Ascending aorta (tissue), 2 donors: ENCODE measurements at regions of chr2 and their contacts with region 1.

Region 1: GRCh38 chr2:42865884-42866881 is 73.8 kb upstream of the HAAO start:
- DNase-seq: peak in 1 of 2 donors; percentile 76
- H3K4me3 ChIP-seq: no peak overlapping the region
- H3K27ac ChIP-seq: peak overlapping the region; percentile 87 to 88
- H3K4me1 ChIP-seq: peaks cover 3 to 22% of the 10 kb centered on the region in 2 donors
- H3K27me3 ChIP-seq: no peaks in the 10 kb centered on the region
- CTCF ChIP-seq: no peak

Region 2: GRCh38 chr2:42792583-42793333 is 73.4 kb before region 1 on chr2 and contains the start of gene HAAO:
- intact Hi-C with region 1: no loop called
- DNase-seq: peak in 1 of 2 donors; percentile 83
- H3K4me3 ChIP-seq: peak within 1 kb of the TSS; percentile 71 to 81
- H3K27ac ChIP-seq: peak within 1 kb of the TSS; percentile 91 to 97
- H3K4me1 ChIP-seq: peaks cover 5 to 30% of the 10 kb centered on the region in 2 donors
- H3K27me3 ChIP-seq: no peaks in the 10 kb centered on the region
- CTCF ChIP-seq: peak in 2 of 3 experiments; percentile 38 to 41
- total RNA-seq, gene HAAO: 7.2 TPM

Region 3: GRCh38 chr2:42906557-42907411 is 40.6 kb after region 1 on chr2:
- intact Hi-C with region 1: loop called (anchors 5 kb)
- DNase-seq: peak in 1 of 2 donors; percentile 83
- H3K4me3 ChIP-seq: peak overlapping the region in 1 of 2 donors; percentile 26
- H3K27ac ChIP-seq: peak overlapping the region; percentile 89 to 90
- H3K4me1 ChIP-seq: peaks cover 37 to 63% of the 10 kb centered on the region in 2 donors
- H3K27me3 ChIP-seq: no peaks in the 10 kb centered on the region
- CTCF ChIP-seq: no peak

Region 4: GRCh38 chr2:42928692-42929545 is 62.7 kb after region 1 on chr2:
- intact Hi-C with region 1: loop called (anchors 5 kb)
- DNase-seq: no peak
- H3K4me3 ChIP-seq: no peak overlapping the region
- H3K27ac ChIP-seq: peak overlapping the region; percentile 97 to 98
- H3K4me1 ChIP-seq: peaks cover 38 to 95% of the 10 kb centered on the region in 2 donors
- H3K27me3 ChIP-seq: no peaks in the 10 kb centered on the region
- CTCF ChIP-seq: peak in 2 of 3 experiments; percentile 8 to 21

Region 5: GRCh38 chr2:43051316-43051715 is 185.1 kb after region 1 on chr2:
- intact Hi-C with region 1: no loop called
- DNase-seq: no peak
- H3K4me3 ChIP-seq: no peak overlapping the region
- H3K27ac ChIP-seq: no peak overlapping the region
- H3K4me1 ChIP-seq: peaks cover 0 to 16% of the 10 kb centered on the region in 2 donors
- H3K27me3 ChIP-seq: no peaks in the 10 kb centered on the region
- CTCF ChIP-seq: no peak